ENCODE measurements at regions of chr16 and their contacts with region 1.

Region 1: GRCh38 chr16:89217388-89218191 is at the start of gene ZNF778:
- DNase-seq: peak; percentile 87
- ATAC-seq: peak; percentile 90
- H3K4me3 Mint-ChIP-seq: peak within 1 kb of the TSS; percentile 72
- H3K27ac Mint-ChIP-seq: peak within 1 kb of the TSS; percentile 92
- H3K4me1 Mint-ChIP-seq: peaks cover 20% of the 10 kb centered on the region
- H3K27me3 Mint-ChIP-seq: no peaks in the 10 kb centered on the region
- total RNA-seq, gene ZNF778: 8.1 to 9.3 TPM

Region 2: GRCh38 chr16:88811769-88812512 is 405.6 kb before region 1 on chr16 and contains the start of gene APRT:
- CTCF ChIA-PET with region 1: interaction called, 12 read pairs
- DNase-seq: peak; percentile 97
- ATAC-seq: peak; percentile 84
- H3K4me3 Mint-ChIP-seq: peak within 1 kb of the TSS; percentile 88
- H3K27ac Mint-ChIP-seq: peak within 1 kb of the TSS; percentile 98
- H3K4me1 Mint-ChIP-seq: peaks cover 30% of the 10 kb centered on the region
- H3K27me3 Mint-ChIP-seq: no peaks in the 10 kb centered on the region
- total RNA-seq, gene APRT: 127 to 148 TPM

Region 3: GRCh38 chr16:88856828-88857733 is 360.5 kb before region 1 on chr16 and contains the starts of genes GALNS and TRAPPC2L:
- CTCF ChIA-PET with region 1: interaction called, 10 read pairs
- DNase-seq: peak; percentile 99
- ATAC-seq: peak; percentile 86
- H3K4me3 Mint-ChIP-seq: peak within 1 kb of the TSS; percentile 94
- H3K27ac Mint-ChIP-seq: peak within 1 kb of the TSS; percentile 91
- H3K4me1 Mint-ChIP-seq: peaks cover 30% of the 10 kb centered on the region
- H3K27me3 Mint-ChIP-seq: no peaks in the 10 kb centered on the region
- total RNA-seq, gene GALNS: 30.8 to 38.8 TPM
- total RNA-seq, gene TRAPPC2L: 49.2 to 51.3 TPM

Region 4: DNA sequence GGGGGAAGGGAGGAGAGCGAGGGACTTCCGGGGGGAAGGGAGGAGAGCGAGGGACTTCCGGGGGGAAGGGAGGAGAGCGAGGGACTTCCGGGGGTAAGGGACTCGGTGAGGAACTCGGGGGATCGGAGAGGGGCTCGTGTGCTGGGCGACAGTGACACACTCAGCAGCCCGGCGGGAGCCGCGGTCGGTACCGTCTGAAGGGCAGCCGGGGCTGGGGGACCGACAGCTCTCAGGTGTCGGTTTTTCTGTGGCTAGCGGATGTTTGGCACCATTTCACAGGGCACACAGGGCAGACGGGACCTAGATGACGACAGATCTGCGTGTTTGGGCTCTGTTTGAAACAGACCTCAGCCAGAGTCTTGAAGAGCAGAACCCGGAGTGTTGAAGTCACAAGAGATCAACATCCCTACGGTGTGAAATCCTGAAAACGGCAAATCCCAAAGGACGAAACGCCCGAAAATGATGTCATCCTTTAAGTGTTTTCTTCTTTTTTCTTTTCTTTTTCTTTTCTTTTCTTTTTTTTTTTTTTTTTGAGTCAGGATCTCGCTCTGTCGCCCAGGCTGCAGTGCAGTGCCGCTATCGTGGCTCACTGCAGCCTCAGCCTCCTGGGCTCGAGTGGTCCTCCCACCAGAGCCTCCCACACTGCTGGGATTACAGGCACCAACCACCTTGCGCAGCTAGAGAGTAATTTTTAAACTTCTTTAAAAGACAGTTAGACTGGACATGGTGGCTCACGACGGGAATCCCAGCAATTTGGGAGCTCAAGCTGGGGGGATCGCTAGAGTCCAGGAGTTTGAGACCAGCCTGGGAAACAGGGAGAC is 23.8 kb after region 1 on chr16:
- CTCF ChIA-PET with region 1: interaction called, 10 read pairs
- DNase-seq: peak; percentile 89
- ATAC-seq: peak; percentile 81
- H3K4me3 Mint-ChIP-seq: peak overlapping the region; percentile 93
- H3K27ac Mint-ChIP-seq: peak overlapping the region; percentile 97
- H3K4me1 Mint-ChIP-seq: peaks cover 21% of the 10 kb centered on the region
- H3K27me3 Mint-ChIP-seq: no peaks in the 10 kb centered on the region

Measured in activated CD8-positive, alpha-beta memory T cell treated with anti-CD3 and anti-CD28 coated beads, Interleukin-2, amount 10 ng/mL, durations not matched to agents 7 days and 5 days (primary cell).